Panc1 (cell line): ENCODE measurements at regions of chr7 and their contacts with region 1.

Region 1: GRCh38 chr7:102045681-102046372 is 228.4 kb downstream of the CUX1 start:
- DNase-seq: no peak
- ATAC-seq: no peak
- H3K4me3 ChIP-seq: no peak overlapping the region; a peak in 1 of 4 replicates
- H3K27ac ChIP-seq: no peak overlapping the region
- H3K4me1 ChIP-seq: no peaks in the 10 kb centered on the region
- H3K27me3 ChIP-seq: no peaks in the 10 kb centered on the region
- CTCF ChIP-seq: no peak

Region 2: DNA sequence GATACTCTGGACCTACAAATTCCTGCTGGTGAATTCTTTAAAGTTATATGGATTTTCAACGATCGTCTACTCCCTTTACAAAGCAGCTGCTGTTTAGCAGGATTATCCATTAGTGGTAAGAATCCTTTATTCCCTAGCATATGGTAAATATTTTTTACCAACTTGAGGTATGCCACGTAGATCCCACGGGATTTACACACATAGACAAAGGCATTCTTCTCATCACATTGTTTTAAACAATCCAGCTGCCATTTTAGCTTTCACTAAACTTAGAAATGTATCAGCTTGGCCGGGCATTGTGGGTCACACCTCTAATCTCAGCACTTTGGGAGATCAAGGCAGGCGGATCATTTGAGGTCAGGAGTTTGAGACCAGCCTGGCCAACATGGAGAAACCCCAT is 92.8 kb after region 1 on chr7:
- CTCF ChIA-PET with region 1: no interaction called
- POLR2A ChIA-PET with region 1: interaction called, 11 read pairs
- in situ Hi-C with region 1: no loop called
- intact Hi-C with region 1: no loop called
- DNase-seq: no peak
- ATAC-seq: no peak
- H3K4me3 ChIP-seq: no peak overlapping the region
- H3K27ac ChIP-seq: no peak overlapping the region
- H3K4me1 ChIP-seq: peaks cover 16% of the 10 kb centered on the region
- H3K27me3 ChIP-seq: no peaks in the 10 kb centered on the region
- CTCF ChIP-seq: no peak

Region 3: GRCh38 chr7:103487433-103487832 is 1441.6 kb after region 1 on chr7:
- CTCF ChIA-PET with region 1: interaction called, 16 read pairs
- POLR2A ChIA-PET with region 1: no interaction called
- in situ Hi-C with region 1: no loop called
- intact Hi-C with region 1: no loop called
- DNase-seq: no peak
- ATAC-seq: no peak
- H3K4me3 ChIP-seq: no peak overlapping the region
- H3K27ac ChIP-seq: no peak overlapping the region
- H3K4me1 ChIP-seq: no peaks in the 10 kb centered on the region
- H3K27me3 ChIP-seq: peaks cover 18% of the 10 kb centered on the region
- CTCF ChIP-seq: no peak